CD8-positive, alpha-beta T cell (primary cell): ENCODE measurements at regions of chr11 and their contacts with region 1.

Region 1: DNA sequence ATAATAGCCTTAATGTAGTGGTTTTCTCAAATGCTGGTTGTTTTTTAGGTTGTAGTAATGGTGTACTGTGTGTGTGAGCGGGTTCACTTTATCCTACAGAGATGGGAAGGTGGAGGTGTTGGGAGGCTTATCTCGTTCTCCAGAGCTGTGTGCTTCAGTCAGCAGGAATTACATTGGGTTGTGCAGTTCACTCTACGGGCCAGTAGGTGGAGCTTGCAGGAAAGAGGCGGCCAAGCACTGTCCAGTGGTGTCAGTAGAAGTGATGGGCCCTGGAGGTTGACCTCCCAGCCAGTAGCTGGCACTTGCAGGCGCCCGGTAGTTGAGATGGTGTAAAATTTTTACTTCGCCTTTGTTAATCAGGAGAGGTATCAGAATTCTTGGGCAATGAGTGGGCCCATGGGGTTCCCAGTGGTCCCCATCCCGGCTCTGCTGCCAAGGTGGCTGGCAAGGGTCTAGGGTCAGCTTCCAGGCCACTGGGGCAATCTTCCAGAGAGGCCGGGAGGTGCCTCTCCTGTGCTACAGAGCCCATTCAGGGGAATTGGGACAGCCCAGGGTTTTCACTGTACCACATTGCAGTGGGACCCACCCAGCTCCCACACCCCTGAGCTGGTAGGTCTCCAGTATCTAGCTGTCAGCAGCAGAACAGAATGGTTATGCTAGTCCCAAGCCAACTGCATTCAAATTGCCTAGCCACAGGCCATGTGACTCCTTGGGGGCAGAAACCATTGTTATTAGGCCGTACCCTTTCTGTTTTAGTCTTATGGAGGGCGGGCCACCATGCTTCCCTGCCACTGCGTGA is 43.9 kb downstream of the BIRC2 start:
- DNase-seq: peak in 8 of 9 experiments; percentile 24 to 77 (median 55)
- ATAC-seq: peak; percentile 71
- H3K4me3 ChIP-seq: no peak overlapping the region
- H3K4me3 Mint-ChIP-seq: no peak overlapping the region
- H3K27ac ChIP-seq: peak overlapping the region in 1 of 2 experiments; percentile 8
- H3K27ac Mint-ChIP-seq: peak overlapping the region; percentile 53
- H3K4me1 ChIP-seq: peaks cover 17% of the 10 kb centered on the region
- H3K4me1 Mint-ChIP-seq: peaks cover 44% of the 10 kb centered on the region
- H3K27me3 ChIP-seq: no peaks in the 10 kb centered on the region
- H3K27me3 Mint-ChIP-seq: no peaks in the 10 kb centered on the region
- CTCF ChIP-seq: peak; percentile 82

Region 2: DNA sequence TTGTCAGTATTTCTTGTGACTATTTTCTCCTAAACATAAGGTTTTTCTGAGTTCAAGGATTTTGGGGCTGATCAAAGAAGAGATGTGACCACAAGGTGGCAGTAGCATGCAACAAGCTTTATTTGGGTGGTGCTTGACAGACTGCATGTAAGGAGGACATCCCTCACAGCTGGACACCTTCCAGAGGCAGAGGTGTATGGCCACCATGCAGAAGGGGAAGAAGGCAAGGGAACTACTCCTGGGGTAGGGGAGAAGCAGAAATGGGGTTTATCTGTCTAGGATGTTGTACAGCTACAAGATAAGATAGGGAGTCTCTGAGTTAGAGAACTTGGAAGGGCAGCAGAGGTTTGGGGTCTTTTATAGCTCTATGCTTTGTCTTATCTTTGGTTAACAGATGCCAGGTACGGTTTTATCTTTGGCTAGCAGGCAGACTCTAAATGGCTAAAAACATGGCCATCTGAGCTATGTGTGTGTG is 49.0 kb before region 1 on chr11:
- CTCF ChIA-PET with region 1: interaction called, 32 read pairs
- POLR2A ChIA-PET with region 1: no interaction called
- intact Hi-C with region 1: no loop called
- DNase-seq: peak; percentile 45 to 89 (median 77)
- ATAC-seq: peak; percentile 22
- H3K4me3 ChIP-seq: no peak overlapping the region
- H3K4me3 Mint-ChIP-seq: no peak overlapping the region
- H3K27ac ChIP-seq: no peak overlapping the region
- H3K27ac Mint-ChIP-seq: peak overlapping the region; percentile 29
- H3K4me1 ChIP-seq: peaks cover 12% of the 10 kb centered on the region
- H3K4me1 Mint-ChIP-seq: peaks cover 17% of the 10 kb centered on the region
- H3K27me3 ChIP-seq: no peaks in the 10 kb centered on the region
- H3K27me3 Mint-ChIP-seq: no peaks in the 10 kb centered on the region
- CTCF ChIP-seq: peak; percentile 74

Region 3: GRCh38 chr11:102367364-102367763 is 23.5 kb before region 1 on chr11:
- CTCF ChIA-PET with region 1: interaction called, 22 read pairs
- POLR2A ChIA-PET with region 1: interaction called, 3 read pairs
- intact Hi-C with region 1: no loop called
- DNase-seq: peak in 2 of 9 experiments; percentile 41 to 61
- ATAC-seq: peak; percentile 77
- H3K4me3 ChIP-seq: no peak overlapping the region
- H3K4me3 Mint-ChIP-seq: no peak overlapping the region
- H3K27ac ChIP-seq: no peak overlapping the region
- H3K27ac Mint-ChIP-seq: peak overlapping the region; percentile 66
- H3K4me1 ChIP-seq: peaks cover 22% of the 10 kb centered on the region
- H3K4me1 Mint-ChIP-seq: peaks cover 42% of the 10 kb centered on the region
- H3K27me3 ChIP-seq: no peaks in the 10 kb centered on the region
- H3K27me3 Mint-ChIP-seq: no peaks in the 10 kb centered on the region
- CTCF ChIP-seq: peak; percentile 70

Region 4: DNA sequence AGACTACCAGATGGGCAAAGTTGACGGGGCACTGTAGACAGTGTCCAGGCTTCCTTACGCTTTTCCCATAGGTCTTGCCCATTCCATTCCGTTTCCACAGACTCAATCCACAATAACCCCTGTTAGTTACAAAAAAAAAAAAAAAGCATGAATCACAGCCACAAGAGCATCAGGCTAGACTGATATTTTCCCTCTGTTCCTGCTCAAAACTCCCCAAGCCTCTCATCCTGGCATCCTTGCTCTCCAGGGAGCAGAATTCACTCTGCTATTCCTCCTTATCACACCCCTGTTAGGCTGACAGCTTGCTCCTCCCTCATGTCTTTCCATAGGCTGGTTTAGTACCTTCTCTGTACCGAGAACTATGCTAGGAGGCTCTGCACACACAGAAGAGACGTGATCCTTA is 19.5 kb after region 1 on chr11:
- CTCF ChIA-PET with region 1: interaction called, 34 read pairs
- POLR2A ChIA-PET with region 1: interaction called, 4 read pairs
- intact Hi-C with region 1: no loop called
- DNase-seq: no peak
- ATAC-seq: no peak
- H3K4me3 ChIP-seq: no peak overlapping the region
- H3K4me3 Mint-ChIP-seq: peak overlapping the region; percentile 6
- H3K27ac ChIP-seq: no peak overlapping the region
- H3K27ac Mint-ChIP-seq: peak overlapping the region; percentile 69
- H3K4me1 ChIP-seq: peaks cover 78% of the 10 kb centered on the region
- H3K4me1 Mint-ChIP-seq: peaks cover 91% of the 10 kb centered on the region
- H3K27me3 ChIP-seq: no peaks in the 10 kb centered on the region
- H3K27me3 Mint-ChIP-seq: no peaks in the 10 kb centered on the region
- CTCF ChIP-seq: no peak

Region 5: GRCh38 chr11:102467056-102467708 is 76.3 kb after region 1 on chr11:
- CTCF ChIA-PET with region 1: interaction called, 10 read pairs
- POLR2A ChIA-PET with region 1: interaction called, 3 read pairs
- intact Hi-C with region 1: no loop called
- DNase-seq: no peak
- ATAC-seq: no peak
- H3K4me3 ChIP-seq: no peak overlapping the region
- H3K4me3 Mint-ChIP-seq: no peak overlapping the region
- H3K27ac ChIP-seq: no peak overlapping the region
- H3K27ac Mint-ChIP-seq: no peak overlapping the region
- H3K4me1 ChIP-seq: peaks cover 79% of the 10 kb centered on the region
- H3K4me1 Mint-ChIP-seq: peaks cover 89% of the 10 kb centered on the region
- H3K27me3 ChIP-seq: no peaks in the 10 kb centered on the region
- H3K27me3 Mint-ChIP-seq: no peaks in the 10 kb centered on the region
- CTCF ChIP-seq: no peak

Region 6: DNA sequence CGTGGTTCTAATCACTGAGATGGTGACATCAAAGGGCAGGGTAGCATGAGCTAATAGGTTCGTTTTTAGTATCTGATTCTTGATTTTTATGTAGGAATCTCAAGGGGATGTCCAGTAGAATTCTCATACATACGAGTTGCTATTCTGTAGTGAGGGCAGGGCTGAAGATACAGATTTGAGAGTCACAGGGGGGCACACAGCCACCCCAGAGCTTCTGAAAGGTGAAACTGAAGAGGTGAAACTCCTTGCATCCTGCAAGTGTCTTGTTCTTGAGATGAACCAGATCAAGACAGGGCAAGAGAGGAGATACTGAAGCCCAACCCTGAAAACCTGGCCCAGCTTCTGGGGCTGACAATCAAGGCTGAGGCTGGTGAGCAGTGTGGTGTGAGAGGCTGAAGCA is 97.3 kb after region 1 on chr11:
- CTCF ChIA-PET with region 1: interaction called, 12 read pairs
- POLR2A ChIA-PET with region 1: no interaction called
- intact Hi-C with region 1: no loop called
- DNase-seq: no peak
- ATAC-seq: no peak
- H3K4me3 ChIP-seq: no peak overlapping the region
- H3K4me3 Mint-ChIP-seq: no peak overlapping the region
- H3K27ac ChIP-seq: no peak overlapping the region
- H3K27ac Mint-ChIP-seq: no peak overlapping the region
- H3K4me1 ChIP-seq: no peaks in the 10 kb centered on the region
- H3K4me1 Mint-ChIP-seq: peaks cover 18% of the 10 kb centered on the region
- H3K27me3 ChIP-seq: no peaks in the 10 kb centered on the region
- H3K27me3 Mint-ChIP-seq: peaks cover 2% of the 10 kb centered on the region
- CTCF ChIP-seq: no peak

Region 7: DNA sequence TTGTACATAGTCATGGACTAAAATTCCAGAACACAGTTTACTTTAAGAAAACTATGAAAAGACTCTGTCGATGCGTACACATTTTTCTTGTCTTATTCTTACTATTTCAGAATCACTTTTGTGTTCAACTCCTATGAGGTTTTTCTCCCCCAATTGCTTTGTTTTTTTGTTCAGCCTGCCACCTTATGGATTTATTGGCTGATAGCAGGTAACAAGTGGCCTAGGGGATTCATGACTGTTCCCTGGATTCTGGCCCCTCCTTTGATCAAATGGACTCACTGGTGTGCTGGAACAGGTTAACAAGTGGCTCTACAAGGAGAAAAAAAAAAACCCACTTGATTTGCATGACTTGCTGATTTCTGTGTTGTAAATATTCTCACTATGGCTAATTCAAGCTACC is 223.6 kb after region 1 on chr11:
- CTCF ChIA-PET with region 1: interaction called, 11 read pairs
- POLR2A ChIA-PET with region 1: no interaction called
- intact Hi-C with region 1: no loop called
- DNase-seq: peak in 1 of 9 experiments; percentile 9
- ATAC-seq: no peak
- H3K4me3 ChIP-seq: no peak overlapping the region
- H3K4me3 Mint-ChIP-seq: no peak overlapping the region
- H3K27ac ChIP-seq: no peak overlapping the region
- H3K27ac Mint-ChIP-seq: no peak overlapping the region
- H3K4me1 ChIP-seq: no peaks in the 10 kb centered on the region
- H3K4me1 Mint-ChIP-seq: peaks cover 3% of the 10 kb centered on the region
- H3K27me3 ChIP-seq: no peaks in the 10 kb centered on the region
- H3K27me3 Mint-ChIP-seq: no peaks in the 10 kb centered on the region
- CTCF ChIP-seq: no peak